GM13977 (cell line): ENCODE measurements at regions of chr1 and their contacts with region 1.

Region 1: DNA sequence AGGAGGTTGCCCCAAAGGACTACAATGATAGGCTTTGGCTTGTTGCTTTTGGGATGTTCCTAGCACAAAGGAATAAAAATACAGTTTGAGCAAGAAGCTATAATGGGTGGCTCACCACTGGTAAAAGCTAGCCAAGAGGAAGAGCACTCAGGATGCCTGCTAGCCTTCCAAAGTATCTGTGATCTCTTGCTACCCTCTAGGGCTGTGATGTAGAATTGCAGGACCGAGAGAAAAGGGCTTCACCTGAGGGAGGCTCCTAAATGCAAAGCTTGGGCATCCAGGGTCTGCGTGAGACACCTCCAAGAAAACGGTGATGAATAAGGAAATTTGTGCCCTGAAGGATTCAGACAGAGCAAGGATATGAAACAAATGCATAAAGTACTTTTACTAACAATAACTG is 17.7 kb downstream of the IVL start:
- DNase-seq: peak; percentile 36
- CTCF ChIP-seq: peak; percentile 80

Region 2: GRCh38 chr1:152869808-152870419 is 56.2 kb before region 1 on chr1:
- in situ Hi-C with region 1: loop called (anchors 10 kb)
- DNase-seq: peak; percentile 76
- CTCF ChIP-seq: peak; percentile 85

Region 3: DNA sequence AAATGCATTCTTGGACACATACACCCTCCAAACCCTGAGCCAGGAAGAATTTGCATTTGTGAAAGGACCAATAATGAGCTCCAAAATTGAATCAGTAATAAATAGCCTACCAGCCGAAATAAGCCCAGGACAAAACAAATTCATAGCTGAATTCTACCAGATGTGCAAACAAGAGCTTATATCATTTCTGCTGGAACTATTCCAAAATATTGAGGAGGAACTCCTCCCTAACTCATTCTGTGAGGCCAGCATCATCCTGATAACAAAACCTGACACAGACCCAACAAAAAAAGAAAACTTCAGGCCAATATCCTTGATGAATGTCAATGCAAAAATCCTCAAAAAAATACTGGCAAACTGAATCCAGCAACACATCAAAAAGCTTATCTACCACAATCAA is 161.6 kb after region 1 on chr1:
- in situ Hi-C with region 1: no loop called
- DNase-seq: no peak
- CTCF ChIP-seq: no peak

Region 4: GRCh38 chr1:153238536-153238935 is 312.4 kb after region 1 on chr1:
- in situ Hi-C with region 1: no loop called
- DNase-seq: no peak
- CTCF ChIP-seq: peak; percentile 18